Gastrocnemius medialis (tissue), 4 donors: ENCODE measurements at regions of chr14 and their contacts with region 1.

Region 1: DNA sequence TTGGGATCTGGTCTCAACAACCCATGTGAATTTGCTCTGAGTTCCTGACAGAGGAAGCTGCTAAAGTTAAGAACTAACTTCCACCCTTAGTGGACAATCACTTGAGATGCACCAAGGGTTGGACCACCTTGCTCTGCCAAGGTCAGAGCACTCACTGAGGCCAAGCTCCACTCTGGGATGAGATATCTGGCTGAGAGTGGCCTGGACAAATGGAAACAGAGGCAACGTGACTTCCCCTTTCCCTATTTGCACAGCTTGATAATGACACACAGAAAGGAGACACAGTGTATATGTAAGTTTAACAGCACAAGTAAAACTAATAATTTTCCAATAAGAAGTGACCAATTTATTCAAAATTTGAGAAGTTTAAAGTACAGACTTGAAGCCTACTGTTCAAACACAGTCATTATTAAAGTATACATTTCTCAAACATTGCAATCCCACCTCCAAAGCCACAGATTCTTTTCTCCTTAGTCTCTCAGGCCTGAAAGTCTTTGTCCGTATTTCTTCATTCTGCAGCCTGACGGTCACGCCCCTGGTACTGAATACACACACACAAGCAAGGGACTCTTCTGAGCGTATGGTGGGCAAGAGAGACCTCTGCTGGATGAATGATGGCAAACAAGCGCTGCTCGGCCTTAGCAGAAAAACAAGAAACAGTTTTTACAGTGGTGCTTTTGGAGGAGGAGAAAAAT is 28.6 kb downstream of the TMEM30B start:
- DNase-seq: peak; percentile 81 to 88
- ATAC-seq: peak; percentile 89 to 91
- H3K4me3 ChIP-seq: no peak overlapping the region
- H3K27ac ChIP-seq: peak overlapping the region; percentile 49 to 71 (median 68)
- H3K4me1 ChIP-seq: peaks cover 10 to 33% of the 10 kb centered on the region in 2 donors
- H3K27me3 ChIP-seq: no peaks in the 10 kb centered on the region
- CTCF ChIP-seq: peak; percentile 81 to 94 (median 88)
- POLR2A ChIP-seq: no peak

Region 2: DNA sequence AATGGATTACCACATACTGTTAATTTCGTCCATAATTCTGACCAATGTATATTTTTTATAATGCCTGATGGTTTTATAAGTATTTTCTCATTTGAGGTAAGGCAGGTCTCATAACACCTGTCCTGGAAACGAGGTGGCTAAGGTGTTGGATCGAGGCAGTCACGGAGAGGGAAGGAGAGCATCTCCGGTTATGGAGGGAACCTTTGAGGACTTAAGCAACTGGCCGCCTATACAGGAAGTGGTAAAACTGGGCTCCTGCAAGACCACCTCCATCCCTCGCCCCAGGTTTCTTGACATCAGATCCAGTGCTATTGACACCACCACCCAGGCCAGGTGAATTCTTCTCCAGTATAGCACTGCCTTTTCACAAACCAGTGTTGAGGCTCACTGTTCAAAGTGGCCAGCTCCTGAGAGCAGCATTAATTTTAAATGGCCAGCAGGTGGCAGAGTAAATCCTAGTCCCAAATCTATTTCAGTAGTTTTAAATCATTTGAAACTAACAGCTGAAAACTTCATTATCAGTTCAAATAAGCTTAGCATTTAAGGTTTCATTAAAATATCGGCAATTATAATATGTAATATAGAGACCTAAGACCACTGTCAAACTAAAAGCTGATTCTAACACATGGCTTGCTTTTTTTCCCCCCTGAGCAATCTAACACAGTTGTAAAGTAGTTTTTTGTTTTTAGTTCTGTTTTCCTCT is 902.7 kb before region 1 on chr14:
- in situ Hi-C with region 1: no loop called
- intact Hi-C with region 1: loop called (anchors 5 kb)
- DNase-seq: no peak
- ATAC-seq: peak; percentile 62 to 69
- H3K4me3 ChIP-seq: peak overlapping the region; percentile 0 to 47 (median 24)
- H3K27ac ChIP-seq: peak overlapping the region in 1 of 4 donors; percentile 23
- H3K4me1 ChIP-seq: peaks cover 0 to 12% of the 10 kb centered on the region in 2 donors
- H3K27me3 ChIP-seq: no peaks in the 10 kb centered on the region
- CTCF ChIP-seq: peak; percentile 42 to 75 (median 56)
- POLR2A ChIP-seq: no peak

Region 3: GRCh38 chr14:60622917-60623257 is 629.6 kb before region 1 on chr14:
- in situ Hi-C with region 1: loop called in 3 of 4 experiments (anchors 5 to 10 kb)
- intact Hi-C with region 1: loop called (anchors 2 kb)
- DNase-seq: no peak
- ATAC-seq: no peak
- H3K4me3 ChIP-seq: no peak overlapping the region
- H3K27ac ChIP-seq: peak overlapping the region in 2 of 4 donors; percentile 35 to 48
- H3K4me1 ChIP-seq: peaks cover 15 to 19% of the 10 kb centered on the region in 2 donors
- H3K27me3 ChIP-seq: no peaks in the 10 kb centered on the region
- CTCF ChIP-seq: no peak
- POLR2A ChIP-seq: no peak

Region 4: DNA sequence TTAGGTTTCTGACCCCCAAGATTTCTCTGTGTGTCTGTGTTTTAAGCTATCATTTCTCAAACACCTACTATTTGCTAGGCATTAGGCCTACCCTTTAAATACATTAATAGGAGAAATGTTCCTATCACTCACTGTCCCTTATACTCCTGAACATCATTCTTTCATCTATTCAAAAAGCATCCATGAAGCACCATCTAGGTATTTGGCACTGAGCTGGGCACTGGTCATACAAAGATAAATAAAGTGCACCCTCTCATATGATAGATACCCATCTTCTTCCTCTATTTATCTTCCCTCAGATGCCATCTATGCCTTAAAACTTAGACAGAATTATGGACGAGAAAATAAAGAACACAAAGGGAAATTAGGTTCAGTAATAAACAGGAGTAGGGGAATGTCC is 623.6 kb before region 1 on chr14:
- in situ Hi-C with region 1: loop called (anchors 5 to 10 kb)
- intact Hi-C with region 1: loop called (anchors 2 kb)
- DNase-seq: no peak
- ATAC-seq: no peak
- H3K4me3 ChIP-seq: no peak overlapping the region
- H3K27ac ChIP-seq: peak overlapping the region in 1 of 4 donors; percentile 10
- H3K4me1 ChIP-seq: peaks cover 0 to 5% of the 10 kb centered on the region in 2 donors
- H3K27me3 ChIP-seq: no peaks in the 10 kb centered on the region
- CTCF ChIP-seq: no peak
- POLR2A ChIP-seq: no peak

Region 5: GRCh38 chr14:60637479-60638315 is 614.8 kb before region 1 on chr14:
- in situ Hi-C with region 1: loop called in 1 of 4 experiments (anchors 10 kb)
- intact Hi-C with region 1: loop called (anchors 5 kb)
- DNase-seq: peak in 1 of 2 donors; percentile 40
- ATAC-seq: peak; percentile 37 to 48
- H3K4me3 ChIP-seq: peak overlapping the region; percentile 57 to 69 (median 62)
- H3K27ac ChIP-seq: peak overlapping the region; percentile 93 to 98 (median 95)
- H3K4me1 ChIP-seq: peaks cover 44 to 52% of the 10 kb centered on the region in 2 donors
- H3K27me3 ChIP-seq: no peaks in the 10 kb centered on the region
- CTCF ChIP-seq: peak in 1 of 5 experiments; percentile 13
- POLR2A ChIP-seq: no peak

Region 6: GRCh38 chr14:61025251-61026223 is 227.0 kb before region 1 on chr14:
- in situ Hi-C with region 1: loop called in 2 of 4 experiments (anchors 5 to 10 kb)
- intact Hi-C with region 1: loop called (anchors 2 kb)
- DNase-seq: peak; percentile 32 to 62
- ATAC-seq: peak; percentile 84 to 87
- H3K4me3 ChIP-seq: no peak overlapping the region
- H3K27ac ChIP-seq: no peak overlapping the region
- H3K4me1 ChIP-seq: peaks cover 10 to 12% of the 10 kb centered on the region in 2 donors
- H3K27me3 ChIP-seq: no peaks in the 10 kb centered on the region
- CTCF ChIP-seq: peak; percentile 72 to 90 (median 87)
- POLR2A ChIP-seq: no peak

Region 7: DNA sequence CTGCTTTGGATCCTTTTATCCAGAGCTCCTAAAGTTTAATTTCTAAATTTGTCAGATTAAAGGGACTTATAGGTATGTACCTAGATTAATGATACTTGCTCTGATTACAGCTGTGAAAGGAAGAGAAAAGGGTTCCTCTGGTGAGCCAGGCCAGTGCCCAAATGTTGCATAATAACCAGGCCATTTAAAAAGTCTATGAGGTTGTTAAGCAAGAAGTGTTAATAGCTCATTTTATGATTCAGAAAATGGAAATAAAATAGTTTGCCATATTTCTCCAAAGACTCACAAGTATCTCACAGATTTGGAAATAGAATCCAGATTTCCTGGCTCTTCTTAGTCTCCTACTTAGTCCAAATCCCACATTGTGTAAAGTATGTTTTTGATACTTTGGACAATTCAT is 203.9 kb before region 1 on chr14:
- in situ Hi-C with region 1: no loop called
- intact Hi-C with region 1: no loop called
- DNase-seq: no peak
- ATAC-seq: peak in 1 of 2 donors; percentile 56
- H3K4me3 ChIP-seq: no peak overlapping the region
- H3K27ac ChIP-seq: peak overlapping the region in 1 of 4 donors; percentile 0
- H3K4me1 ChIP-seq: no peaks in the 10 kb centered on the region
- H3K27me3 ChIP-seq: no peaks in the 10 kb centered on the region
- CTCF ChIP-seq: no peak
- POLR2A ChIP-seq: no peak

Region 8: DNA sequence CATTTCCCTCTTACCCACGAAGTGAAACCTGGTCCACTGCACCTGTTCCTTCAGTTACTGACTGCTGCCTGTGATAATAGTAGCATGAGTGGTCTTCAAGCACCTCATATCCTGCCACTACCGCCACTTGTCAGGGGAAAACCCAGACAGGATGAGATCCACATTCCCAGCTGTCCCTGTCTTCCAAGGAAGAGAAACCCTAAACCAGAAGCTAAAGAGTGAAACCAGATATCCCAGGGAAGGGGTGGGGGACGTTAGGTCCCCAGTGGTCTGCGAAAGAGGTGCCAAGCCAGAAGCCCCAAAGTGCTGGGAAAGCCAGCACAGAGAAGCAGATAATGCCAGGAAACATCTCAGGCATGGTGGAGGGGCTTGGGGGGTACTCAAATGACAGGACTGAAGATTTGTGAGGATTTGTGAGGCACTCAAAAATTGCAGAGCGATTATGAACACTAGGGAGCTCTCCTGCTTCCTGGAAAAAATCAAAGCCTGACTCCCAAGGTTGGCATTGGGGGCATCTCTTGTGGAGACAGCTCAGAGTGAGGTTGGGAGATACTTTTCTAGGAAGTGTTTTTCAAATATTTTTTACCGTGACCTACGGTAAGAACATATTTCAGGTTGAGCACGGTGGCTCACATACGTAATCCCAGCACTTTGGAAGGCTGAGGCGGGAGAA is 49.3 kb before region 1 on chr14:
- in situ Hi-C with region 1: no loop called
- intact Hi-C with region 1: loop called (anchors 2 kb)
- DNase-seq: peak; percentile 27 to 73
- ATAC-seq: peak; percentile 75 to 87
- H3K4me3 ChIP-seq: peak overlapping the region; percentile 9 to 37 (median 23)
- H3K27ac ChIP-seq: peak overlapping the region; percentile 79 to 88 (median 83)
- H3K4me1 ChIP-seq: peaks cover 30 to 33% of the 10 kb centered on the region in 2 donors
- H3K27me3 ChIP-seq: no peaks in the 10 kb centered on the region
- CTCF ChIP-seq: peak in 3 of 5 experiments; percentile 21 to 23 (median 23)
- POLR2A ChIP-seq: no peak